ENCODE measurements at regions of chr22 and their contacts with region 1.

Region 1: DNA sequence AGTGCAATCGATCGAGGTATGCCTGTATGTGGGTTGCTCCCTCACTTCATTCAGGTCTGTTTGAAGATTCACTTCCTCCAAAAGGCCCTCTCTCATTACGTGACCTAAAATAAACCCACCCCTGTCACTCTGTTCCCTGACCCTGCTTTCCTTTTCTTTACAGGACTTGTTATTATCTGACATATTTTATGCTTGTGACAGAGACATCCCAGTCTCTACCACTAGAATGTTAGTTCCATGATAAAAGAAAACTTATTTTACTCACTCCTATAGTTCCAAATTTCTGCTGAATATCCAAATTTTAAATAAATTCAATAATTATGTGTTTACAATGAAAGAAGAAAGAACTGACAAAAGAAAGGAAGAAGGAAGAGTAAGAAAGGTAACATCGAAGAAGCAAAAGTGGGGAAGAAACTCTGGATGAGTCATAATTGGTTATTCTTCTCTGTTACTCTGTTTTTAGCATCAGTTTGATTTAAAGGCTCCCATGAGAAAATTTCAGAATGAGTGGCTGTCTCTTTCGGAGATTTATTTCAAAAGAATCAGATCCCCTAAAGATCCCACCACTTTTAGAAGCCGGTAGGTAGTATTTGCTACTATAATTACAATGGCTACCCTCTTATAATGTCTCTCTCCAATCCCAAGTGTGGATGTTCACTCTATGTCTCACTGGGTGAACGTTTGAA is 33.5 kb downstream of the ENTHD1 start:
- DNase-seq: peak; percentile 48
- ATAC-seq: peak; percentile 65
- H3K4me3 ChIP-seq: peak overlapping the region in 1 of 5 experiments; percentile 19
- H3K4me3 Mint-ChIP-seq: peak overlapping the region; percentile 56
- H3K27ac ChIP-seq: no peak overlapping the region
- H3K27ac Mint-ChIP-seq: peak overlapping the region; percentile 37
- H3K4me1 ChIP-seq: peaks cover 24 to 26% of the 10 kb centered on the region in 2 donors
- H3K4me1 Mint-ChIP-seq: peaks cover 30% of the 10 kb centered on the region
- H3K27me3 ChIP-seq: no peaks in the 10 kb centered on the region
- H3K27me3 Mint-ChIP-seq: no peaks in the 10 kb centered on the region
- CTCF ChIP-seq: no peak

Region 2: DNA sequence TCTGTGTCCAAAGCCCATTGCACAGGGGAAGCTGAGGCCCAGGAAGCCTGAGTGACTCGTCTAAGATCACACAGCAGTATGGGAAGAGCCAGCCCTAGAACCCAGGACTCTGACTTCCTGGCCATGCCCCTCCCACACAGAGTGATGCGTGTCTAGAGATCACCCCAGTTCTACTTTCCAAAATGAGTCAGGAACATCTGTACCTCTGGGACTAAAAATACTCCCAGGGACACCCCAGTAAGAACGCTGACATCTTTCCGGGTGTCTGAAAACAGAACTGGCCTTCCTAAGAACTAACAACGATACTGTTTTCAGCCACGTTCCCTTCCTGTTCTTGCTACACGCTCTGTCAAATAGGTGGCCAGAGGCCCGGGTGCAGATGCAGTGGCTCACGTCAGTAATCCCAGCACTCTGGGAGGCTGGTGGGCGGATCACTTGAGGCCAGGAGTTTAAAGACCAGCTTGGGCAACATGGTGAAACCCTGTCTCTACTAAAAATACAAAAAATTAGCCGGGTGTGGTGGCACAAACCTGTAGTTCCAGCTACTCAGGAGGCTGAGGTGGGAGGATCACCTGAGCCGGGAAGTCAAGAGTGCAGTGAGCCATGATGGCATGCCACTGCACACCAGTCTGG is 593.5 kb before region 1 on chr22:
- CTCF ChIA-PET with region 1: no interaction called
- POLR2A ChIA-PET with region 1: no interaction called
- intact Hi-C with region 1: no loop called
- DNase-seq: no peak
- ATAC-seq: peak; percentile 21
- H3K4me3 ChIP-seq: no peak overlapping the region
- H3K4me3 Mint-ChIP-seq: no peak overlapping the region
- H3K27ac ChIP-seq: no peak overlapping the region
- H3K27ac Mint-ChIP-seq: no peak overlapping the region
- H3K4me1 ChIP-seq: peaks cover 0 to 6% of the 10 kb centered on the region in 2 donors
- H3K4me1 Mint-ChIP-seq: peaks cover 5% of the 10 kb centered on the region
- H3K27me3 ChIP-seq: peaks cover 0 to 16% (median 0%) of the 10 kb centered on the region in 4 experiments
- H3K27me3 Mint-ChIP-seq: peaks cover 16% of the 10 kb centered on the region
- CTCF ChIP-seq: no peak

Region 3: DNA sequence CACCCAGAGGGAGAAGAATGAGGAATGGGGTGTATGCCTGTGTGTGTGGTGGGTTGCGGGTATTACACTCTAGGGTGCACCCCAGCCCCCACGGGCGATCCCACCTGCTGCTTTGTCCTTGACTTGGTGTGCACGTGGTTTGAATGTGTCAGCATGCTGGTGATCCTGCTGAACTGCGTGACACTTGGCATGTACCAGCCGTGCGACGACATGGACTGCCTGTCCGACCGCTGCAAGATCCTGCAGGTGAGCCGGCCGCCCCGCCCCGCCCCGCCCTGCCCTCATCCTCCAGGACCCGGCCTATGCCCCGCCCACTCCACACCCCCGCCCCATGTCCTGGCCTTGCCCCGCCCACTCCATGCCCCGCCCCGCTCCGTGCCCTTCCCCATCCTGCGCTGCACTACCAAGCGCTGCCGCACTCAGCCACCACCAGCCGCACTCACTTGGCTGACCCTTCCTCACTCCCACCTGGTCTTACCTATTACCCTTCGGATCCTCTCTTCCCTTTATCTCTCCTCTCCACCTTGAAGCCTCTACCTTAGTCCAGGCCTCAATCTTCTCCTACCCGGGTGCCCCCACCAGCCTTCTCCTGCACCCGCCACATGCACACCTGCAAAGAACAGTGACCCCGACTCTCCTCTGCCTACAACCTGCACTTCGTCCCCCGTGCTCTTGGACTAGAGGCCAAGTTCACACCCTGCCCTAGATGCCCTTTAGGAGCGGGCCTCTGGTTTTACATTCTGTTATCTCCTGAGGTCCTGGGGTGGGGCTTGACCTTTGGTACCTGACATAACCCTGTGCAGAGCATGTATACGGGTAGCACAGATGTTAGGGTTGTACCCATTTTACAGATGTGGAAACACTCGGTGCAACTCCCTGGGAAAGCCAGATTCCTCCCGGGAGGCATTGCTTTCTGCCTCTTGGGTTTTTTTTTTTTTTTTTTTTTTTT is 261.8 kb before region 1 on chr22:
- CTCF ChIA-PET with region 1: no interaction called
- POLR2A ChIA-PET with region 1: no interaction called
- intact Hi-C with region 1: no loop called
- DNase-seq: peak; percentile 71
- ATAC-seq: peak; percentile 58
- H3K4me3 ChIP-seq: no peak overlapping the region
- H3K4me3 Mint-ChIP-seq: peak overlapping the region; percentile 57
- H3K27ac ChIP-seq: no peak overlapping the region
- H3K27ac Mint-ChIP-seq: peak overlapping the region; percentile 65
- H3K4me1 ChIP-seq: peaks cover 17 to 26% of the 10 kb centered on the region in 2 donors
- H3K4me1 Mint-ChIP-seq: peaks cover 33% of the 10 kb centered on the region
- H3K27me3 ChIP-seq: peaks cover 0 to 48% (median 15%) of the 10 kb centered on the region in 4 experiments
- H3K27me3 Mint-ChIP-seq: peaks cover 34% of the 10 kb centered on the region
- CTCF ChIP-seq: no peak

Region 4: DNA sequence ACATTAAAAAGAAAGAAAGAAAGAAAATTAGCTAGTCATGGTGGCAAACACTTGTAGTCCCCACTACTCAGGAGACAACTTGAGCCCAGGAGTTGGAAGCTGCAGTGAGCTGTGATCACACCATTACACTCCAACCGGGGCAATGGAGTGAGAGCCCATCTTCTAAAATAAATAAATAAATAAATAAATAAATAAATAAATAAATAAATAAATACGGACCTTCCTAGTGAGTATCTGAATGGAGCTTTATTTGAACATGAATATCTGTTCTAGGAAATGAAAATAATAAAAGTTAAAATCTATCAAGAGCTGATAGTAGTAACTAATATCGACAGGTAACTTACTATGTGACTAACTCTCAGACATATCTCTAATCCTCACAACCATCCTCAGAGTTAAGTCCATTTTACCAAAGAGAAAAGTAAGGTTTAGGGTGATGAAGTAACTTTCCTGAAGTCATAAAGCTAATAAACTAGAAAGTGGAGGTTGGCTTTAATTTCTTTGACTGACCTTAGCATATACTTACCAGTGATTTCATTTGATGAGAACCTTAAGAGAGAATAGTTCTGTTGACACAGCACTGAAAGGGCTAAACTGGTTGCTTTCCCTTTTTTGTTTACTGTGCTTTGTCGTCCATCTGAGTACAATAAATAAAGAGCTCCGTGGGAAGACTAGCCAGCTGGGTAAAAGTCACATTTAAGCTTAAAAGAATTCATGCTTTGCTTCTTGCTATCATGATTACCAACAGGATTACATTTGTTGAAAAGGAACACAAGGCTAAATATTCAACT is 11.2 kb after region 1 on chr22:
- CTCF ChIA-PET with region 1: interaction called, 11 read pairs
- POLR2A ChIA-PET with region 1: no interaction called
- intact Hi-C with region 1: no loop called
- DNase-seq: no peak
- ATAC-seq: no peak
- H3K4me3 ChIP-seq: no peak overlapping the region
- H3K4me3 Mint-ChIP-seq: no peak overlapping the region
- H3K27ac ChIP-seq: no peak overlapping the region
- H3K27ac Mint-ChIP-seq: no peak overlapping the region
- H3K4me1 ChIP-seq: peaks cover 28% of the 10 kb centered on the region in 2 donors
- H3K4me1 Mint-ChIP-seq: peaks cover 30% of the 10 kb centered on the region
- H3K27me3 ChIP-seq: no peaks in the 10 kb centered on the region
- H3K27me3 Mint-ChIP-seq: no peaks in the 10 kb centered on the region
- CTCF ChIP-seq: no peak